WTC11 (cell line): ENCODE measurements at regions of chr15 and their contacts with region 1.

Region 1: GRCh38 chr15:90886041-90886614 is 1.8 kb downstream of the FES start:
- DNase-seq: peak; percentile 89
- ATAC-seq: peak; percentile 47
- H3K4me3 Mint-ChIP-seq: no peak overlapping the region
- H3K27ac Mint-ChIP-seq: no peak overlapping the region
- H3K4me1 Mint-ChIP-seq: peaks cover 22% of the 10 kb centered on the region
- H3K27me3 Mint-ChIP-seq: no peaks in the 10 kb centered on the region
- CTCF ChIP-seq: peak; percentile 93

Region 2: DNA sequence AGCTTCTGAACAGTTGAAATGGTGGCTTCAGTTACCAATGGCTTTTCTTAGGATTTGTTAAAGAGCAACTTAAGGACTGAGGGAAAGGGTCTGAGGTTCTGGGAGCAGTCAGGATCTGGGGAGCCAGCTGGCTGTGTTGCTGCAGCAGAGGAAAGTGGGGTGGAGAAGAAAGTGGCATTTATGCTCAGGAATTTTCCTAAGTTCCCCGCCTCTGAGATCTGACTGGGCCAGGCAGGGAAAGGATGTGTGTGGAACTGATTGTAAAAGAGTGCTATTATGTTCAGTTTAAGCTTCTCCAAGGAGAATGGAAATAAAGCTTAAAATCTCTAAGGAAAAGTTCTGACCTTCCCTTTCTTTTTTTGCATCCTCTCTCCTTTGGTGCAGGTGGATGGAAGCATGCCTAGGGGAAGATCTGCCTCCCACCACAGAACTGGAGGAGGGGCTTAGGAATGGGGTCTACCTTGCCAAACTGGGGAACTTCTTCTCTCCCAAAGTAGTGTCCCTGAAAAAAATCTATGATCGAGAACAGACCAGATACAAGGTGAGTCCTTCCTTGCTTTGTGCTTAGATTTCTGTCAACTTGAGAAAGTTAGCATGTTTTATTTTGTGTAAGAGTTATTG is 460.3 kb before region 1 on chr15:
- CTCF ChIA-PET with region 1: no interaction called
- POLR2A ChIA-PET with region 1: no interaction called
- DNase-seq: no peak
- ATAC-seq: peak; percentile 77
- H3K4me3 Mint-ChIP-seq: no peak overlapping the region
- H3K27ac Mint-ChIP-seq: peak overlapping the region; percentile 89
- H3K4me1 Mint-ChIP-seq: peaks cover 25% of the 10 kb centered on the region
- H3K27me3 Mint-ChIP-seq: no peaks in the 10 kb centered on the region
- CTCF ChIP-seq: no peak

Region 3: GRCh38 chr15:90642464-90643300 is 243.4 kb before region 1 on chr15:
- CTCF ChIA-PET with region 1: interaction called, 46 read pairs
- POLR2A ChIA-PET with region 1: no interaction called
- DNase-seq: no peak
- ATAC-seq: peak; percentile 78
- H3K4me3 Mint-ChIP-seq: no peak overlapping the region
- H3K27ac Mint-ChIP-seq: peak overlapping the region; percentile 68
- H3K4me1 Mint-ChIP-seq: peaks cover 13% of the 10 kb centered on the region
- H3K27me3 Mint-ChIP-seq: no peaks in the 10 kb centered on the region
- CTCF ChIP-seq: no peak

Region 4: GRCh38 chr15:90716976-90717821 is 168.9 kb before region 1 on chr15 and contains the start of gene BLM:
- CTCF ChIA-PET with region 1: interaction called, 25 read pairs
- POLR2A ChIA-PET with region 1: interaction called, 5 read pairs
- DNase-seq: peak; percentile 95
- ATAC-seq: peak; percentile 99
- H3K4me3 Mint-ChIP-seq: peak within 1 kb of the TSS; percentile 98
- H3K27ac Mint-ChIP-seq: peak within 1 kb of the TSS; percentile 98
- H3K4me1 Mint-ChIP-seq: peaks cover 16% of the 10 kb centered on the region
- H3K27me3 Mint-ChIP-seq: no peaks in the 10 kb centered on the region
- CTCF ChIP-seq: no peak
- total RNA-seq, gene BLM: 29.9 to 40.5 TPM (median 34.8 TPM) in 3 replicates

Region 5: GRCh38 chr15:90826206-90827068 is 59.7 kb before region 1 on chr15:
- CTCF ChIA-PET with region 1: interaction called, 11 read pairs
- POLR2A ChIA-PET with region 1: no interaction called
- DNase-seq: no peak
- ATAC-seq: no peak
- H3K4me3 Mint-ChIP-seq: no peak overlapping the region
- H3K27ac Mint-ChIP-seq: no peak overlapping the region
- H3K4me1 Mint-ChIP-seq: peaks cover 13% of the 10 kb centered on the region; the same call in 1 of the 2 replicates
- H3K27me3 Mint-ChIP-seq: no peaks in the 10 kb centered on the region
- CTCF ChIP-seq: no peak

Region 6: GRCh38 chr15:90859234-90860131 is 26.6 kb before region 1 on chr15:
- CTCF ChIA-PET with region 1: interaction called, 11 read pairs
- POLR2A ChIA-PET with region 1: no interaction called
- DNase-seq: no peak
- ATAC-seq: peak; percentile 83
- H3K4me3 Mint-ChIP-seq: no peak overlapping the region
- H3K27ac Mint-ChIP-seq: peak overlapping the region; percentile 93
- H3K4me1 Mint-ChIP-seq: peaks cover 14% of the 10 kb centered on the region
- H3K27me3 Mint-ChIP-seq: no peaks in the 10 kb centered on the region
- CTCF ChIP-seq: no peak

Region 7: GRCh38 chr15:90902040-90902839 is 16.1 kb after region 1 on chr15:
- CTCF ChIA-PET with region 1: interaction called, 46 read pairs
- POLR2A ChIA-PET with region 1: interaction called, 3 read pairs
- DNase-seq: peak; percentile 78
- ATAC-seq: peak; percentile 77
- H3K4me3 Mint-ChIP-seq: peak overlapping the region; percentile 70
- H3K27ac Mint-ChIP-seq: peak overlapping the region; percentile 41; the same call in 1 of the 2 replicates
- H3K4me1 Mint-ChIP-seq: peaks cover 23% of the 10 kb centered on the region
- H3K27me3 Mint-ChIP-seq: peaks cover 26% of the 10 kb centered on the region
- CTCF ChIP-seq: no peak